T-cell (primary cell): ENCODE measurements at regions of chr10 and their contacts with region 1.

Region 1: GRCh38 chr10:72419241-72419640 is 64.5 kb upstream of the DNAJB12 start:
- DNase-seq: no peak
- ATAC-seq: no peak
- H3K4me3 ChIP-seq: no peak overlapping the region
- H3K4me3 Mint-ChIP-seq: no peak overlapping the region
- H3K27ac ChIP-seq: no peak overlapping the region
- H3K27ac Mint-ChIP-seq: no peak overlapping the region
- H3K4me1 ChIP-seq: no peaks in the 10 kb centered on the region
- H3K4me1 Mint-ChIP-seq: no peaks in the 10 kb centered on the region
- H3K27me3 ChIP-seq: no peaks in the 10 kb centered on the region
- H3K27me3 Mint-ChIP-seq: no peaks in the 10 kb centered on the region

Region 2: DNA sequence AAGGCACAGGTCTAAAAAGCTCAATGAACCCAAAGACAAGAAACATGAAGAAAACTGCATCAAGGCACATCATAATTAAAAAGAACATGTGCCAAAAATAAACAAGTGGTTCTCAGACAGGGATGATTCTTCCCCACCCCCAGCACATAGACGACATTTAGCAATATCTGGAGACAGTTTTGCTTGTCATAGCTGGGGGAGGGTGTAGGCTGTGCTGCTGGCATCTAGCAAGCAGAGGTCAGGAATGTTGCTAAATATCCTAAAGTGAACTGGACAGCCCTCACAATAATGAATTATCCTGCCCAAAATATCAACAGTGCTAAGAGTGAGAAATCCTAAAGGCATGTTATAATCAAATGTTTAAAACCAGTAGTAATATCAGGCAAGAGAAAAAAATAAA is 84.0 kb after region 1 on chr10:
- CTCF ChIA-PET with region 1: no interaction called
- POLR2A ChIA-PET with region 1: no interaction called
- DNase-seq: no peak
- ATAC-seq: no peak
- H3K4me3 ChIP-seq: no peak overlapping the region
- H3K4me3 Mint-ChIP-seq: no peak overlapping the region
- H3K27ac ChIP-seq: no peak overlapping the region
- H3K27ac Mint-ChIP-seq: no peak overlapping the region
- H3K4me1 ChIP-seq: no peaks in the 10 kb centered on the region
- H3K4me1 Mint-ChIP-seq: peaks cover 2 to 10% (median 6%) of the 10 kb centered on the region in 3 donors
- H3K27me3 ChIP-seq: no peaks in the 10 kb centered on the region
- H3K27me3 Mint-ChIP-seq: no peaks in the 10 kb centered on the region

Region 3: DNA sequence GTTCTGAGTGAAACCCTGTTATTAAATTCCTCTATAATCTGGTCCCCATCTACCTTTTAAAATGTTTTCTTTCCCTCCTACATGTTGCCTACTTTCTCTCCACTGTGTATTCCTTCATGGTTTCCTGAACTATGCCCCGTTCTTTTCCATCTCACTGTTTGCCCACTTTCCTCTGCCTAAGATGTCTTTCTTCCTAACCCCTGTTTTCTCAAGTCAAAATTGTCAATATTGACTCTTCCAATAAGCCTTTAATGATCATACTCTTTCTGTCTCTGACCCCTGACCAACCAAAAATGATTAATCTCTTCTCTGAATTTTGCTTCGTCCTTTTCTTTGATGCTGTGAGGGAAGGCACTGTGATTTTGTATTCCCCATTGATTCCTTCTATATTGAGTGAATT is 443.7 kb after region 1 on chr10:
- CTCF ChIA-PET with region 1: no interaction called
- POLR2A ChIA-PET with region 1: interaction called in 1 of 2 experiments, 10 read pairs
- DNase-seq: no peak
- ATAC-seq: no peak
- H3K4me3 ChIP-seq: no peak overlapping the region
- H3K4me3 Mint-ChIP-seq: no peak overlapping the region
- H3K27ac ChIP-seq: no peak overlapping the region
- H3K27ac Mint-ChIP-seq: no peak overlapping the region
- H3K4me1 ChIP-seq: no peaks in the 10 kb centered on the region
- H3K4me1 Mint-ChIP-seq: no peaks in the 10 kb centered on the region
- H3K27me3 ChIP-seq: no peaks in the 10 kb centered on the region
- H3K27me3 Mint-ChIP-seq: no peaks in the 10 kb centered on the region